ENCODE measurements at regions of chr1 and their contacts with region 1.

Region 1: GRCh38 chr1:172588296-172589291 is 55.6 kb downstream of the SUCO start:
- DNase-seq: peak; percentile 69
- H3K4me3 Mint-ChIP-seq: peak overlapping the region; percentile 60
- H3K27ac Mint-ChIP-seq: peak overlapping the region; percentile 96
- H3K4me1 Mint-ChIP-seq: peaks cover 49% of the 10 kb centered on the region
- H3K27me3 Mint-ChIP-seq: no peaks in the 10 kb centered on the region
- CTCF ChIP-seq: no peak

Region 2: GRCh38 chr1:172537827-172538391 is 50.7 kb before region 1 on chr1:
- CTCF ChIA-PET with region 1: interaction called, 7 read pairs
- intact Hi-C with region 1: loop called (anchors 5 kb)
- DNase-seq: no peak
- H3K4me3 Mint-ChIP-seq: peak overlapping the region; percentile 6
- H3K27ac Mint-ChIP-seq: peak overlapping the region; percentile 31
- H3K4me1 Mint-ChIP-seq: peaks cover 71% of the 10 kb centered on the region
- H3K27me3 Mint-ChIP-seq: no peaks in the 10 kb centered on the region
- CTCF ChIP-seq: no peak

Region 3: DNA sequence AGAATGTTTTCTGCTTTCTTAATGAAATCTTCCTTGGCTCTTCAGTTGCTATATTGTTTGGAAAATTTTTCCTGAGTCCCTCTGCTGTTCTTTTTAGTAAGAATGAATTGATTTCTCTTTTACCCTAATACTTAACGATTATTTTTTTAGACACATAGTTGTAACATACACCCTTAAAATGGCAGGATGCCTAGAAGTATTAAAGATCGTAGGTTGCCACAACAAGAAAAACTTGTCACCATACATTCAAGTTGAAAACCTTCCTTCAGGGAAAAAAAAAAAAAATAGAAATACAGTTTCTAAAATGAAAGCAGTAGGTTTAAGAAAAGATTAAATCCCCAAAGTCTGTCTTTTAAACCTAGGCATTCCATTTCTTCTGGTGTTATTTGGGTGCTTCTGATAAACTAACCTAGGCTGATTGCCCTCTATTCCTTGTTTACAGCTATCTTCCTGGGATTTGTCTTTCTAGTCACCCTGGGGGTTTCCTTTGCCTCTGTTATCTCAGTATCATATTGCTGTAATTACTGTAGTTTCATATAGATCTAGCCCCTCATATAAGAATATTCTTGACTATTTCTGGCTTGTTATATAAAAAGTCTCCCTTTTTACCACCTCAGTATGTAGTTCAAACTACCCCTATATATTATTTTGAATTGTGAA is 38.8 kb before region 1 on chr1:
- CTCF ChIA-PET with region 1: no interaction called
- intact Hi-C with region 1: loop called (anchors 5 kb)
- DNase-seq: no peak
- H3K4me3 Mint-ChIP-seq: peak overlapping the region; percentile 29
- H3K27ac Mint-ChIP-seq: peak overlapping the region; percentile 63
- H3K4me1 Mint-ChIP-seq: peaks cover 41% of the 10 kb centered on the region
- H3K27me3 Mint-ChIP-seq: no peaks in the 10 kb centered on the region
- CTCF ChIP-seq: no peak

Region 4: DNA sequence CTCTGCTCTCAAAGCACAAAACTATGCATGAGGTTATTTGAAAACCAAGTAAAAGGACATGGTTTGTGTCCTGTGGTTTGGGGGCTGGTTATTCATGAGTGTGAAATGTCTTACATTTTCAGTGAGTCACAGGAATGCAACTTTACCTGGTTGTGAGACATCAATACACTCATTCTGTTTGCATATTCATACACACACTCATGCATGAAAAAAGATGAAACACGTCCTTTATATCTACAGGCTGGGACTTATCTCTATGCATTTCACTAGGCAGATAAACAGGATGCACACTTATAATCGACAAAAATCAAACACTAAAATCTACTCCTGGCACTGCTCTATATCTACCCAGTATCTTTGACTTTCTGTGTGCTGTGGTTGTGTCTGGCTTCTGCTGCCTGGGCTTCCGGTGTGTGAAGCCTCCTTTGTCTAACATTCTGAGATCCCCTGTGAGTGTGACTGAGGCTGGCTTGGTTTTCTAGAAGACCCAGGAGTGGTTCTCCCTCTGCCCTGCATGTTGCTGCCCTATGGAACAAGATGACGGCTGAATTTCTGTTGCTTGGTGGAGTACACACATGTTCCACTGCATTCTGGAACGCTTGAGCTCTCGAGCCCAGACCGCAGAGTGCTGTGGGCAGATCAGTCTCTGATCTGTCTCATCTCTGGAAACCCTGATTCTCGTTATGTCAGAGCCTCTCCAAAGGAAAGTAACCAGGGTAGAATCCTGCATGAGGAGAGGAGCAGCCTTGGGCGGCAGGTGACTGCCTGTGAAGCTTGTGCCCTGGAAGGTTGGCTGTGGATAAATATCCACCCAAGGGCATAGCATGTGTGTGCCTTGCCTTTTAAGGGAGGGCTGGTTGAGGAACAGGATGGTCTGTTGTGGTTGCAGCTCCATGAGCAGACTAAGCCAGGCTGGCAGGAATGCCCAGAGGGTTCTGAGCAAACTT is 50.6 kb after region 1 on chr1:
- CTCF ChIA-PET with region 1: no interaction called
- intact Hi-C with region 1: loop called (anchors 5 kb)
- DNase-seq: peak; percentile 55
- H3K4me3 Mint-ChIP-seq: peak overlapping the region; percentile 42
- H3K27ac Mint-ChIP-seq: peak overlapping the region; percentile 86
- H3K4me1 Mint-ChIP-seq: peaks cover 67% of the 10 kb centered on the region
- H3K27me3 Mint-ChIP-seq: no peaks in the 10 kb centered on the region
- CTCF ChIP-seq: no peak

Region 5: GRCh38 chr1:172906778-172907592 is 318.4 kb after region 1 on chr1:
- CTCF ChIA-PET with region 1: no interaction called
- intact Hi-C with region 1: no loop called
- DNase-seq: peak; percentile 45
- H3K4me3 Mint-ChIP-seq: peak overlapping the region; percentile 24
- H3K27ac Mint-ChIP-seq: peak overlapping the region; percentile 93
- H3K4me1 Mint-ChIP-seq: peaks cover 65% of the 10 kb centered on the region
- H3K27me3 Mint-ChIP-seq: no peaks in the 10 kb centered on the region
- CTCF ChIP-seq: no peak